ENCODE measurements at regions of chr12 and their contacts with region 1.

Region 1: DNA sequence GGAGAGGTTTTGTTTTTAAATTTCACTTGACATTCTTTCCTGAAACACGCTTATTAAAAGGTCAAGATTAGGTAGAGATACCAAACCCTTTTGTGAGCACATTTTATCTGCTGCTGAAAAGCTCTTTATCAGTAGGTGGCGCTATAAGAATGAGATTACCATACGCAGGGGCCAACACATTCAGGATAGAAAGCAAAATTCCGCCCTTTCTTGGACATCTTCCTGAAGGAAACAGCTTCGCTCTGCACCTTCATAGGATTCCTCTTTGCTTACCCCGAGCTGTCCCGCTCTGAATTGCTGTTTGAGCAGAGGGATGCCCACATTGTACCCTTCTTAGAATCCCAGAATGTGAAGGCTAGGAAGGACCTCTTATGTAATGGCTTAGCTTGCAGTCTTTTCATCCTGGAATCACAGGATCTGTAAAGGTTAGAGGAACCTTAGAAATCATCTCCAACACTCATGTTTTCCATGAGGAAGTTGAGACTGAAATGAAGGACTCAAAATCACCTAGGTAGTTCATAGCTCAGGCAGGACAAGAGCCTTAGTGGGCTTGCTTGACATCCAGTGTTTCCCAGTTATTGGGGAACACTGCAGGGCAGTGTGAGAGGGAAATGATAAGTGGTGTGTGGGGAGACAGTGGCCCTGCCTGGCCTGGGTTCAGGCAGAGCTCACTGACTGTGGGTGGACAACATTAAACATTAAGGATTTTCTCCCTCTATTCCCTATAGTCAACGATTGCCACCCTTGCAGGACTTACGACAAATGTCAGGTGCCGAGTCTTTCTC is 38.7 kb upstream of the CRY1 start:
- DNase-seq: no peak
- ATAC-seq: peak; percentile 33 to 56
- H3K4me3 ChIP-seq: no peak overlapping the region
- H3K27ac ChIP-seq: no peak overlapping the region
- H3K4me1 ChIP-seq: no peaks in the 10 kb centered on the region
- H3K27me3 ChIP-seq: no peaks in the 10 kb centered on the region

Region 2: GRCh38 chr12:107066691-107067090 is 65.3 kb before region 1 on chr12:
- intact Hi-C with region 1: no loop called
- DNase-seq: no peak
- ATAC-seq: no peak
- H3K4me3 ChIP-seq: no peak overlapping the region
- H3K27ac ChIP-seq: no peak overlapping the region
- H3K4me1 ChIP-seq: no peaks in the 10 kb centered on the region
- H3K27me3 ChIP-seq: no peaks in the 10 kb centered on the region

Region 3: GRCh38 chr12:107402041-107403022 is 270.3 kb after region 1 on chr12:
- intact Hi-C with region 1: loop called in 3 of 4 experiments (anchors 10 kb)
- DNase-seq: peak in 2 of 3 donors; percentile 58 to 61
- ATAC-seq: no peak
- H3K4me3 ChIP-seq: no peak overlapping the region
- H3K27ac ChIP-seq: no peak overlapping the region
- H3K4me1 ChIP-seq: no peaks in the 10 kb centered on the region
- H3K27me3 ChIP-seq: no peaks in the 10 kb centered on the region

Region 4: GRCh38 chr12:107607464-107608392 is 475.7 kb after region 1 on chr12:
- intact Hi-C with region 1: loop called (anchors 2 to 5 kb)
- DNase-seq: peak; percentile 83 to 90 (median 89)
- ATAC-seq: peak; percentile 70 to 81
- H3K4me3 ChIP-seq: no peak overlapping the region
- H3K27ac ChIP-seq: no peak overlapping the region
- H3K4me1 ChIP-seq: no peaks in the 10 kb centered on the region
- H3K27me3 ChIP-seq: no peaks in the 10 kb centered on the region

Measured in right cardiac atrium (tissue), 5 donors.